ENCODE measurements at regions of chr6 and their contacts with region 1.

Region 1: DNA sequence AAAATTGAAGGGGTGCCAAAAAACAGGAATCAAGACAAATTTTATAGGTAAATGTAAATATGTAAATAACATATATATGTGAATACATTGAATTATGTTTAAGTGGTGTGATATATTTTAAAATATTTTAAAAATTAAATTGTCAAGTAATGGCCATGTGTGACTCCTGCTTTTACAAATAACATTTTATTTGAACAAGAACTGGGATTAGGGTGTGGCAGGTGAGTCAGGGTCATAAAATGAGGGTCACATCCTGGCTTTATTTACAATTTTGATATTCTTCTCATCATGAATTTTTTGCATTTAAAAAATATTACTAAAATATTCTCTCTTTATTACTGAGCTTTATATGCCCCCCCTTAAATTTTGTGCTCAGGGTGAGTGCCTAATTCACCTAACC is 601.1 kb upstream of the MAN1A1 start:
- DNase-seq: no peak
- H3K4me3 ChIP-seq: no peak overlapping the region
- CTCF ChIP-seq: no peak
- POLR2A ChIP-seq: no peak

Region 2: GRCh38 chr6:119370080-119370479 is 580.6 kb before region 1 on chr6:
- intact Hi-C with region 1: no loop called
- DNase-seq: no peak
- H3K4me3 ChIP-seq: no peak overlapping the region
- CTCF ChIP-seq: no peak
- POLR2A ChIP-seq: no peak

Region 3: DNA sequence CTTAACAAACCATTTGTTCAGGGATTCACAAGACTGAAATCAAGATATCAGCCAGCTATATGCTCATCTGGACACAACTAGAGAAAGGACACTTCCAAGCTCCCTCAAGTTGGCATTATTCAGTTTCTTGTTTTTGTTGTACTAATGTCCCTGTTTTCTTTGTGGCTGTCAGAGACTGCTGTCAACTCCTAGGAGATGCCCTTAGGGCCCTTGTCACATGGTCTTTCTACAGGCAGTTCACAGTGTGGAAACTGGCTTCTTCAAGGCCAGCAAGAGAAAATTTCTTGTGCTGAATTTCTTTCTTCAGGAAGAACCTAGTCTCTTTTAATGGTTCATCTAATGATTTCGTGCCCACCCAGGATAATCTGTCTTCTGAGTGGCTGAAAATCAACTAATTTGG is 76.1 kb after region 1 on chr6:
- intact Hi-C with region 1: loop called (anchors 5 kb)
- DNase-seq: no peak
- H3K4me3 ChIP-seq: no peak overlapping the region
- CTCF ChIP-seq: no peak
- POLR2A ChIP-seq: no peak